CD4-positive, alpha-beta T cell (primary cell): ENCODE measurements at regions of chr11 and their contacts with region 1.

Region 1: GRCh38 chr11:130052567-130052966 is 17.1 kb upstream of the APLP2 start:
- DNase-seq: no peak
- ATAC-seq: no peak
- H3K4me3 ChIP-seq: no peak overlapping the region
- H3K4me3 Mint-ChIP-seq: no peak overlapping the region
- H3K27ac ChIP-seq: no peak overlapping the region
- H3K27ac Mint-ChIP-seq: no peak overlapping the region
- H3K4me1 ChIP-seq: no peaks in the 10 kb centered on the region
- H3K4me1 Mint-ChIP-seq: no peaks in the 10 kb centered on the region
- H3K27me3 ChIP-seq: peaks cover 0 to 3% of the 10 kb centered on the region in 2 experiments
- H3K27me3 Mint-ChIP-seq: peaks cover 9% of the 10 kb centered on the region
- CTCF ChIP-seq: no peak

Region 2: DNA sequence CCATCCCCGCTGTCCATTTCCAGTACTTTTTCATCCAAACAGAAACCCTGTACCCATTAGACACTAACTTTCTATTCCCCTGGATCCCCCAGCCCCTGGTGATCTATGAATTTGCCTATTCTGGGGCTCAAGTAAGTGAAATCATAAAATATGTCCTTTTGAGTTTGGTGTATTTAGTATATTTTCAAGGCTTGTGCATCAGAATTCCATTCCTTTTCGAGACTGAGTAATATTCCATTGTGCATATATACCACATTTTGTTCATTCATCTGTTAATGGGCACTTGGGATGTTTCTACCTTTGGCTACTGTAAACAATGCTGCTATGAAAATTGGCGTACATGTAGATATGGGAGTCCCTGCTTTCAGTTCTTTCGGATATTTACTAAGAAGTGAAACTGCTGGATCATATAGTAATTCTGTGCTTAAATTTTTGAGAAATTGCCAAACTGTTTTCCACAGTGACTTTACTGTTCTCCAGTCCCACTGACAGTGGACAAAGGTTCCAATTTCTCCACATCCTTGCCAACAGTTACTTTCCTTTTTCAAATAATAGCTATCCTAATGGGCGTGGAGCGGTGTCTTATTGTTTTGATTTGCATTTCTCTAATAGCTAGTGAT is 33.2 kb after region 1 on chr11:
- CTCF ChIA-PET with region 1: no interaction called
- POLR2A ChIA-PET with region 1: no interaction called
- intact Hi-C with region 1: loop called in 1 of 2 experiments (anchors 2 kb)
- DNase-seq: no peak
- ATAC-seq: no peak
- H3K4me3 ChIP-seq: no peak overlapping the region
- H3K4me3 Mint-ChIP-seq: no peak overlapping the region
- H3K27ac ChIP-seq: no peak overlapping the region
- H3K27ac Mint-ChIP-seq: no peak overlapping the region
- H3K4me1 ChIP-seq: no peaks in the 10 kb centered on the region
- H3K4me1 Mint-ChIP-seq: peaks cover 21% of the 10 kb centered on the region
- H3K27me3 ChIP-seq: no peaks in the 10 kb centered on the region
- H3K27me3 Mint-ChIP-seq: no peaks in the 10 kb centered on the region
- CTCF ChIP-seq: no peak